ENCODE measurements at regions of chr9 and their contacts with region 1.

Region 1: GRCh38 chr9:97468658-97469448 is 32.6 kb upstream of the TMOD1 start:
- DNase-seq: peak; percentile 75
- H3K4me3 ChIP-seq: no peak overlapping the region
- H3K27ac ChIP-seq: peak overlapping the region in 1 of 2 experiments; percentile 32; a peak in 1 of 4 replicates
- H3K4me1 ChIP-seq: peaks cover 0 to 2% of the 10 kb centered on the region in 2 experiments; a peak in 2 of 4 replicates
- H3K27me3 ChIP-seq: no peaks in the 10 kb centered on the region
- CTCF ChIP-seq: peak; percentile 79
- EP300 ChIP-seq: no peak
- RAD21 ChIP-seq: peak; percentile 99

Region 2: DNA sequence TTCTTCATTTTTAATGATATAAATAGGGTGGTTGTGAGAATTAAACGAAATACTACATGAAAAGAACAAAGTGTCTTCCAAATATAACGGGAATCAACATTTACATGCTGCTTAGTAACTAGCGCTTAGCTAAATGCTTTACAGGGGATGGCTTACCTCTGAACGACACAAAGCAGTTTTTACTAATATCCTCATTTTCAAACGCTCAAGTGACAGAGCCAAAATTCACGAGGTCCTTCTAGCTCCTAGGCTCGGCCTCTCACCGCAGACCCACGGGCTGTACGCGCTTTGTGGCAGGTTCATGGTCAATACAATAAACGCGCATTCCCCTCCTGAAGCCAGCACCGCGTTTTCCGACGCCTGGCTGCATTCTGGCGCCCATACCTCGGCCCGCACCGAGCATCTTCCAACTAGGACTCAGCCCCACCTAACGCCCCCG is 691.4 kb before region 1 on chr9:
- CTCF ChIA-PET with region 1: no interaction called
- POLR2A ChIA-PET with region 1: no interaction called
- DNase-seq: no peak
- H3K4me3 ChIP-seq: peak overlapping the region; percentile 78 to 82
- H3K27ac ChIP-seq: peak overlapping the region in 1 of 2 experiments; percentile 68; a peak in 3 of 4 replicates
- H3K4me1 ChIP-seq: peaks cover 7% of the 10 kb centered on the region in 2 experiments; a peak in 3 of 4 replicates
- H3K27me3 ChIP-seq: no peaks in the 10 kb centered on the region
- CTCF ChIP-seq: no peak
- EP300 ChIP-seq: no peak
- RAD21 ChIP-seq: no peak

Region 3: GRCh38 chr9:96854073-96854876 is 614.6 kb before region 1 on chr9 and contains the start of gene ZNF782:
- CTCF ChIA-PET with region 1: interaction called, 11 read pairs
- POLR2A ChIA-PET with region 1: no interaction called
- DNase-seq: peak; percentile 94
- H3K4me3 ChIP-seq: peak within 1 kb of the TSS; percentile 65 to 85
- H3K27ac ChIP-seq: peak within 1 kb of the TSS in 1 of 2 experiments; percentile 36; a peak in 3 of 4 replicates
- H3K4me1 ChIP-seq: peaks cover 14 to 15% of the 10 kb centered on the region in 2 experiments
- H3K27me3 ChIP-seq: no peaks in the 10 kb centered on the region
- CTCF ChIP-seq: no peak
- EP300 ChIP-seq: no peak
- RAD21 ChIP-seq: no peak
- polyA plus RNA-seq, gene ZNF782: 1.3 TPM in 2 replicates

Region 4: DNA sequence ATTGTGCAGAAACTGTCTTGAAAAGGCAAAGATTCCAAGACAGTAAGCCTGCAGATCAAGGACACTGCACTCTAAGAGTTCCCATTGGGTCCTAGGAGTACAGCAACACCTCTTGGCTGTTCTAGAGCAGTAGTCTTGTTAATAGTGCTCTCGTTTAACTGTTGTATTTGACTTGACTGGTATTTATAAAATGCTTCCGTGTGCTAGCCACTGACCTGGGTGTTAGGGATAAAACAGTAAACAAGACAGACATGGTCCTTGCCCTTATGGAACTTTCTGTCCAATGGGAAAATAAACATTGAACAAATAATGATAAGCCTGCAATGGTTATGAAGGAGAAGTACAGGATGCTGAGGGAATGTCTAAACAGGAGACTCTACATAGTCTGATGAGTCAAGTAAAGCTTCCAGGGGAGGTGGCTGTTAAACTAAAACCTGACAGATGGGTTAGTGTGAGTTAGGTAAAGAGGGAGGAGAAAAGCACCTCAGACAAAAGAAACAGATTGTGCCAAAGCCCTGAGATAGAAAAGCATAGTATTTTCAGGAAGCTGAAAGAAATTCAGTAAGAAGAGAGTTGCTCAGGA is 23.6 kb before region 1 on chr9:
- CTCF ChIA-PET with region 1: interaction called, 44 read pairs
- POLR2A ChIA-PET with region 1: no interaction called
- DNase-seq: no peak
- H3K4me3 ChIP-seq: no peak overlapping the region
- H3K27ac ChIP-seq: no peak overlapping the region
- H3K4me1 ChIP-seq: no peaks in the 10 kb centered on the region; a peak in 1 of 4 replicates
- H3K27me3 ChIP-seq: no peaks in the 10 kb centered on the region
- CTCF ChIP-seq: no peak
- EP300 ChIP-seq: no peak
- RAD21 ChIP-seq: no peak

Region 5: DNA sequence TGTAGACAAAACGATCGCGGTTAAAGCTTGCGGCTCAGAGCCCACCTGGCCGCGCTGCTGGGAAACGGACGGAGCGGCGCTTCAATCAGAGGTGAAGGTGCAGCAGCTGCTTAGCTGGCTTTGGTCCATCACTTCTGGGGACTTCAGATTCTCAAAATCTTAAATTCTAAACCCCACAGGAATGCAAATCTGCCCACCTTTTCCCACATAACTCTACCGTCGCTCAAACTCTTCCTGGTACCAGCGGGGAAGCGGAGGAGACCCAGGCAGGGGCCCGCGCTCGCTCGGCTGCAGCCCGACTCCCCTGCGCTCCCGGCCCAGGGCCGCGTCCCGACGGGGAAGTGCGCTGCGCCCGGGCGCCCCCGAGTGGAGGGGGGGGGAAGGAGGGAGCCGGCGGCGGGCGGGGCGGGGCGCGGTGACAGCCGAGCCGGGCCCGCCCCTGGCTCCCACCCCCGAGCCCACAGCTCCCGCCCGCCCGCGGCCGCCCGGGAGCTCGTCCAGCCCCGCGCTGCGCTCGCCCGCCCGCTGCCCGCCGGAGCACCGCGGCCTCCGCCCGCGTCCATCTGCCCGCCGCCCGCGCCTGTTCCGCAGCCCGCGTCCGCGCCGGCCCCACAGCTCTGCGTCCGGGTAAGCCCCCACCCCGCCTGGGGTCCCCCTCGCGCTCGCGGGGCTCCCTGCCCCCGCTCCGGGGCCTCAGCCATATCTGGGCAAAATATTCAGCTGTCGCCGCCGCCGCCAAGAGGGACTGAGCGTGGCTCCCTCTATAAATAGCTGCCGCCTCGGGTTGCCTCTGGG is 32.5 kb after region 1 on chr9 and contains the start of gene TMOD1:
- CTCF ChIA-PET with region 1: interaction called, 153 read pairs
- POLR2A ChIA-PET with region 1: interaction called, 3 read pairs
- DNase-seq: peak; percentile 99
- H3K4me3 ChIP-seq: peak within 1 kb of the TSS; percentile 60 to 64
- H3K27ac ChIP-seq: peak within 1 kb of the TSS in 1 of 2 experiments; percentile 100; a peak in 2 of 4 replicates
- H3K4me1 ChIP-seq: peaks cover 0 to 29% of the 10 kb centered on the region in 2 experiments; a peak in 2 of 4 replicates
- H3K27me3 ChIP-seq: peaks cover 48% of the 10 kb centered on the region
- CTCF ChIP-seq: peak; percentile 23
- EP300 ChIP-seq: no peak
- RAD21 ChIP-seq: peak; percentile 25; the same call in 1 of the 2 replicates
- polyA plus RNA-seq, gene TMOD1: 0.54 and 1.6 TPM in 2 replicates

Region 6: GRCh38 chr9:97559111-97559514 is 90.3 kb after region 1 on chr9:
- CTCF ChIA-PET with region 1: interaction called, 65 read pairs
- POLR2A ChIA-PET with region 1: no interaction called
- DNase-seq: no peak
- H3K4me3 ChIP-seq: no peak overlapping the region
- H3K27ac ChIP-seq: peak overlapping the region in 1 of 2 experiments; percentile 35; a peak in 2 of 4 replicates
- H3K4me1 ChIP-seq: peaks cover 0 to 86% of the 10 kb centered on the region in 2 experiments; a peak in 2 of 4 replicates
- H3K27me3 ChIP-seq: 0 out of 2 replicates have a peak, but pooled peaks cover 16% of the 10 kb centered on the region
- CTCF ChIP-seq: no peak
- EP300 ChIP-seq: no peak
- RAD21 ChIP-seq: no peak

Region 7: DNA sequence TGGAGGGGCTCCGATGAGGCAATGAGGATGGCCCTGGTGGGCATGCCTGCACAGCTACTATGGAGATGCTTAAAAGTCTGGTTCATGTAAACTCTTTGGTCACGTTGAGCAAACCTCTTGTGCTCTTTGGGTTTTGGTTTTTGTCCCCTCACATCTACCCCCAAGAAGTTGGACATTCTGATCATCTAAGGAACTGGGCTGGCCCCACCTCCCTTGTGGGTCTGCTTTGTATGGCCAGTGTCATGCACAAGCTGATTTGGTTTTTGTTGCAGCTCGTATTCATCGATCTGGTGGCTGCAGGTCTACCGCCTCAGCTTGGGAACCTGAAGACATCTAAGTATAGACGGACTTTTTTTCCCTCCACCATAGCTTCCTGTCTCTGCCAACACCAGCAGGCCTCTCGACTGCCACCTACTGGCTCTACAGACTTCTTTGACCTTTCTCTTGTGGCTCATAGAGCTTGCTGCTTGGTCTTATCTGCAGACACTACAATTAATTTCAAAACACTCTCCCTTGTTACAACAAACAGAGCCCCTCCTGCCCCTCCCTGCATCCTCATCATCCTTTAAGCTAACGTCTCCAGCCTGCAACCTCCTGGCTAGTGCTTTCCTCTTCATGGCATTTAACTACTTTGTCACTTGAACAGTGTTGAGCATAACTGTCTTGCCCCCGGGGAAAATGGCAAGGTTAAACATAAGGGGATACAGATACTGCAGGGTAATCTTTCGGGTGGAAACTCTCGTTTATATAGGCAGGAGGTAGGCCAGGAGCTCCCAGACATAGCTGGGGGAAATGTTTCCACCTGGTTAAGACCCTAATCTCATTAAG is 129.8 kb after region 1 on chr9:
- CTCF ChIA-PET with region 1: interaction called, 677 read pairs
- POLR2A ChIA-PET with region 1: interaction called, 6 read pairs
- DNase-seq: peak; percentile 71
- H3K4me3 ChIP-seq: no peak overlapping the region
- H3K27ac ChIP-seq: peak overlapping the region in 1 of 2 experiments; percentile 58; a peak in 2 of 4 replicates
- H3K4me1 ChIP-seq: peaks cover 0 to 34% of the 10 kb centered on the region in 2 experiments; a peak in 2 of 4 replicates
- H3K27me3 ChIP-seq: no peaks in the 10 kb centered on the region
- CTCF ChIP-seq: peak; percentile 88
- EP300 ChIP-seq: no peak
- RAD21 ChIP-seq: peak; percentile 81

Region 8: GRCh38 chr9:97632985-97633858 is 164.4 kb after region 1 on chr9 and contains the starts of genes NCBP1 and TSTD2:
- CTCF ChIA-PET with region 1: interaction called, 20 read pairs
- POLR2A ChIA-PET with region 1: interaction called, 4 read pairs
- DNase-seq: peak; percentile 94
- H3K4me3 ChIP-seq: peak within 1 kb of the TSS; percentile 92 to 99
- H3K27ac ChIP-seq: peak within 1 kb of the TSS; percentile 99 to 100
- H3K4me1 ChIP-seq: peaks cover 19 to 20% of the 10 kb centered on the region in 2 experiments; a peak in 3 of 4 replicates
- H3K27me3 ChIP-seq: no peaks in the 10 kb centered on the region
- CTCF ChIP-seq: no peak
- EP300 ChIP-seq: no peak
- RAD21 ChIP-seq: no peak
- polyA plus RNA-seq, gene NCBP1: 11.3 and 15.6 TPM in 2 replicates
- polyA plus RNA-seq, gene TSTD2: 11.5 and 18.6 TPM in 2 replicates